Activated T-helper 1 cell treated with anti-CD3 and anti-CD28 coated beads, Interleukin-12 subunit alpha, Interleukin-12 subunit beta, Interleukin-2, Interleukin-4 antibody, amounts not matched to agents 30 ng/mL and 10 ng/mL and 1 ng/mL, durations not matched to agents 14 hours and 24 hours and 36 hours (primary cell): ENCODE measurements at regions of chr6 and their contacts with region 1.

Region 1: GRCh38 chr6:52233975-52234823 is 10.1 kb downstream of the IL17F start:
- DNase-seq: no peak
- H3K4me3 Mint-ChIP-seq: no peak overlapping the region
- H3K27ac Mint-ChIP-seq: no peak overlapping the region
- H3K4me1 Mint-ChIP-seq: peaks cover 36% of the 10 kb centered on the region
- H3K27me3 Mint-ChIP-seq: peaks cover 73% of the 10 kb centered on the region

Region 2: DNA sequence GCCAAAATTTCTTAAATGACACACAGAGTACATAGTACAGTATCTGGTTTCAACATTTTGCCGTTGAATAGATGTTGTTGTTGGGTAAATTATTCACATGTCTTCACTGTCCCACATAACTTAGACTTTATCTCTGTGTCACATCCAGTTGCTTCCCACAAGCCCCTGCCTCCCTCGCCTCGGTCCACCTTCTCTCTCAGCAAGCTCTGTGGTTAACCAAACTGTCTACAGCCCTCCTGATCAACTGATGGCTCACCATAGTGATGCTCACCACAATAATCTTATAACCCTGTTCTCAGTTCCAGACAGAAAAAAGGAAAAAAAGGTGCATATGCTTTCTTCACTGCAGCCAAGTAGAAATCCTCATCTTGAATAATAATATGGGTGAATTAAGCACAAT is 12.9 kb before region 1 on chr6:
- intact Hi-C with region 1: loop called (anchors 1 kb)
- DNase-seq: peak; percentile 12
- H3K4me3 Mint-ChIP-seq: no peak overlapping the region
- H3K27ac Mint-ChIP-seq: no peak overlapping the region
- H3K4me1 Mint-ChIP-seq: peaks cover 9% of the 10 kb centered on the region
- H3K27me3 Mint-ChIP-seq: peaks cover 57% of the 10 kb centered on the region

Region 3: GRCh38 chr6:52253494-52253893 is 19.3 kb after region 1 on chr6:
- intact Hi-C with region 1: loop called (anchors 1 kb)
- DNase-seq: peak; percentile 19
- H3K4me3 Mint-ChIP-seq: no peak overlapping the region
- H3K27ac Mint-ChIP-seq: no peak overlapping the region
- H3K4me1 Mint-ChIP-seq: peaks cover 32% of the 10 kb centered on the region
- H3K27me3 Mint-ChIP-seq: peaks cover 54% of the 10 kb centered on the region

Region 4: GRCh38 chr6:52389626-52390360 is 155.6 kb after region 1 on chr6:
- intact Hi-C with region 1: loop called (anchors 1 kb)
- DNase-seq: peak; percentile 45
- H3K4me3 Mint-ChIP-seq: peak overlapping the region; percentile 66
- H3K27ac Mint-ChIP-seq: peak overlapping the region; percentile 88
- H3K4me1 Mint-ChIP-seq: peaks cover 62% of the 10 kb centered on the region
- H3K27me3 Mint-ChIP-seq: peaks cover 4% of the 10 kb centered on the region

Region 5: DNA sequence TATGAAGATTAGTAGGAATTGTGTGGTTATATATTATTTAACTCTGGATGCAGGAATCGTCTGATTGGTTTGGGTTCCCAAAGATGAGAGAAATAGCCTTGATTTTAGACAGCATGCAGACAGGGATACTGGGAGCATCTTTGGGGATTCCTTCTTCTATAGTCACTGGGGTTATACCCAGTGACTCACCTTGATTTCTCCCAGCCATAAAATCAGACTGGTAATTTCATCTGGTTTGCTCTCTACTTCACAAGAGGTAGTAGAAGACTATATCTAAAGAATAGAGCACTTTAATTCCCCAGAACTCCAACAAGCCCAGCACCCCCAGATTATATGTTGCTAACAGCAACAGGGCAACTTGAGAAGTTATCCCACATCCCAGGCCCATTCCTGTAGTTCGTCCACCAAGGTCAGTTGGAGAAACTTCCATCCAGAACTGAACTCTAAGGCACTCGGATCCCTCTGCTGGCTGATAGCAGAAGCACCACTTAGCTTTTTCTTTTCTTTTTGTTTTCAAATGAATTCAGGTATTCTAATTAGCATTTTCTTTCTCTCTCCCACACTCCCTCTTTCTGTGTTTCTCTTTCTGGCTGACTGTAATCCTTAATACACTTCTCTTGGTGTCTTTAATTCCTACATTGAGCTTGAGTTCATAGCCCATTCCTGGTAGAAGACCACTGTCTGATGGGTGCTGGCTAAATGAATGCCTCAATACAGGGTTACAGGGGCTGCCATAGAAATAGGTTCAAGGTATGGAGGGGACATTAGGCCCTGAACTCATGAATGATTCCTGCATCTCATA is 165.5 kb after region 1 on chr6:
- intact Hi-C with region 1: loop called (anchors 1 kb)
- DNase-seq: no peak
- H3K4me3 Mint-ChIP-seq: peak overlapping the region; percentile 42
- H3K27ac Mint-ChIP-seq: peak overlapping the region; percentile 38
- H3K4me1 Mint-ChIP-seq: peaks cover 52% of the 10 kb centered on the region
- H3K27me3 Mint-ChIP-seq: peaks cover 5% of the 10 kb centered on the region

Region 6: GRCh38 chr6:52984247-52984646 is 750.0 kb after region 1 on chr6:
- intact Hi-C with region 1: loop called (anchors 5 kb)
- DNase-seq: peak; percentile 47
- H3K4me3 Mint-ChIP-seq: peak overlapping the region; percentile 44
- H3K27ac Mint-ChIP-seq: peak overlapping the region; percentile 78
- H3K4me1 Mint-ChIP-seq: peaks cover 71% of the 10 kb centered on the region
- H3K27me3 Mint-ChIP-seq: peaks cover 6% of the 10 kb centered on the region